Endothelial cell of umbilical vein (primary cell): ENCODE measurements at regions of chr6 and their contacts with region 1.

Region 1: GRCh38 chr6:166275714-166276166 is 32.5 kb downstream of the PRR18 start:
- DNase-seq: peak; percentile 54
- H3K4me3 ChIP-seq: no peak overlapping the region
- H3K27ac ChIP-seq: no peak overlapping the region
- H3K4me1 ChIP-seq: no peaks in the 10 kb centered on the region
- H3K27me3 ChIP-seq: no peaks in the 10 kb centered on the region
- CTCF ChIP-seq: peak; percentile 93 to 98
- POLR2A ChIP-seq: no peak

Region 2: GRCh38 chr6:165858586-165858985 is 417.2 kb before region 1 on chr6:
- CTCF ChIA-PET with region 1: no interaction called
- POLR2A ChIA-PET with region 1: no interaction called
- dilution Hi-C with region 1: no loop called
- intact Hi-C with region 1: no loop called
- DNase-seq: no peak
- H3K4me3 ChIP-seq: no peak overlapping the region
- H3K27ac ChIP-seq: no peak overlapping the region
- H3K4me1 ChIP-seq: no peaks in the 10 kb centered on the region
- H3K27me3 ChIP-seq: peaks cover 5 to 10% of the 10 kb centered on the region in 2 experiments
- CTCF ChIP-seq: peak in 1 of 2 donors; percentile 6
- POLR2A ChIP-seq: no peak

Region 3: GRCh38 chr6:166221040-166221439 is 54.7 kb before region 1 on chr6:
- CTCF ChIA-PET with region 1: no interaction called
- POLR2A ChIA-PET with region 1: no interaction called
- dilution Hi-C with region 1: no loop called
- intact Hi-C with region 1: no loop called
- DNase-seq: no peak
- H3K4me3 ChIP-seq: no peak overlapping the region
- H3K27ac ChIP-seq: no peak overlapping the region
- H3K4me1 ChIP-seq: no peaks in the 10 kb centered on the region
- H3K27me3 ChIP-seq: no peaks in the 10 kb centered on the region
- CTCF ChIP-seq: no peak
- POLR2A ChIP-seq: no peak

Region 4: GRCh38 chr6:166956444-166957086 is 680.8 kb after region 1 on chr6 and contains the start of gene RNASET2:
- CTCF ChIA-PET with region 1: no interaction called
- POLR2A ChIA-PET with region 1: no interaction called
- dilution Hi-C with region 1: no loop called
- intact Hi-C with region 1: loop called (anchors 10 kb)
- DNase-seq: peak; percentile 91
- H3K4me3 ChIP-seq: peak within 1 kb of the TSS; percentile 60 to 63 (median 61)
- H3K27ac ChIP-seq: no peak within 1 kb of the TSS
- H3K4me1 ChIP-seq: peaks cover 21% of the 10 kb centered on the region
- H3K27me3 ChIP-seq: no peaks in the 10 kb centered on the region
- CTCF ChIP-seq: no peak
- POLR2A ChIP-seq: peak; percentile 20
- total RNA-seq, gene RNASET2: 10.0 and 10.7 TPM in 2 replicates